Mammary epithelial cell (primary cell): ENCODE measurements at regions of chr5 and their contacts with region 1.

Region 1: DNA sequence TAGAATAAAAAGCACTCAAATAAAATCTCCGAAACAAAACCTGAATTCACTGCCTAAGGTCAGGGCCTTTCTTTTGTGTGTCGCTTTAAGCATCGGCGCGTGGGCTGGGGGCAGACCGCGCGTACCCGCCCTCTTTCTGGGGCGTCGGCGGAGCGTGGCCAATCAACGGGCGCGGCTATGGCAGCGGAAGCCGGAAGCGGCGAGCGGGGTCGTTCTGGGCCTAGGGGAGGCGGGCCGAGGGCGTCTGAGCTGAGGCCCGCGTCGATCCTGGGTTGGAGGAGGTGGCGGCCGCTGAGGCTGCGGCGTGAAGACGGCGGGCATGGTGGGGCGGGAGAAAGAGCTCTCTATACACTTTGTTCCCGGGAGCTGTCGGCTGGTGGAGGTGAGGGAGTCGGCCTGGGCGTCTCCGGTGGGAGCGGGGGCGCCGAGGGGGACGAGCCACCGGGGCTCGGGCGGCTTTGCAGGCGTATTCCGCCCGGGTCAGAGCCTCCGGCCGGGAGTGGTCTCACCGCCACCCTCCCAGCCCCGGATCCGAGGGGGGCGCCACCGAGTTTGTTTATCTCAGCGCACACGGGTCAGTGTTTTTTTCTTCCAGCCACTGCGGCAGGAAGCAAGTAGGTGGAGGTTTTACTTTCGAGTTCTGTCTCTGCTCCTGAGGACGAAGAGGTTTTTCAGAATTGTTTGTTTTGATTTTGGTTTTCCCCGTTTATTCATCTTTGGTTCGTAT is at the start of gene MAT2B:
- DNase-seq: peak; percentile 95
- H3K4me3 ChIP-seq: peak within 1 kb of the TSS; percentile 65 to 95 (median 76)
- H3K27ac ChIP-seq: peak within 1 kb of the TSS; percentile 95
- H3K4me1 ChIP-seq: peaks cover 14% of the 10 kb centered on the region
- H3K27me3 ChIP-seq: no peaks in the 10 kb centered on the region
- CTCF ChIP-seq: peak; percentile 17 to 48
- total RNA-seq, gene MAT2B: 46.1 to 49.2 TPM

Region 2: DNA sequence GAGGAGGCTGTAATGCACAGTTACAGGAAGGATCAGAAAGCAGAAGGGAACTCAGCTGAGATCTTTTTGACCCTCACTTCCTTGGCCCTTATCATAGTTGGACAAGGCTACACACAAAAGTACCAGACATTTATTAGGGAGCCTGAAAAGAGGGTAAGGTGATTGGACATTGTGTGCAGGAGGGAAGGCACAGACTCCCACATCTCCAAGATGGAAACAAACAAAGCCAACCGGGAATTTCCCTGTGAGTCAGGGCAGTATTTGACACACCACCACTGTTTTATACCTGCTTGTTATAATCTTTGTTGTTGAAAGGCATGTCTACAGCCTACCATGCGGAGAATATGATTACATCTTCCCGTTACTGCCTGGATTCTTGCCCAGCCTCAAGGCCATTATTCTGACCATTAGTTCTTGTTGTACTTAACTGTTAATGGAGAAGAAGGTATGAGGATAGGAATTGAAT is 71.1 kb before region 1 on chr5:
- CTCF ChIA-PET with region 1: no interaction called
- dilution Hi-C with region 1: no loop called
- in situ Hi-C with region 1: no loop called
- intact Hi-C with region 1: no loop called
- DNase-seq: peak; percentile 87
- H3K4me3 ChIP-seq: no peak overlapping the region
- H3K27ac ChIP-seq: no peak overlapping the region
- H3K4me1 ChIP-seq: peaks cover 6% of the 10 kb centered on the region
- H3K27me3 ChIP-seq: no peaks in the 10 kb centered on the region
- CTCF ChIP-seq: no peak

Region 3: DNA sequence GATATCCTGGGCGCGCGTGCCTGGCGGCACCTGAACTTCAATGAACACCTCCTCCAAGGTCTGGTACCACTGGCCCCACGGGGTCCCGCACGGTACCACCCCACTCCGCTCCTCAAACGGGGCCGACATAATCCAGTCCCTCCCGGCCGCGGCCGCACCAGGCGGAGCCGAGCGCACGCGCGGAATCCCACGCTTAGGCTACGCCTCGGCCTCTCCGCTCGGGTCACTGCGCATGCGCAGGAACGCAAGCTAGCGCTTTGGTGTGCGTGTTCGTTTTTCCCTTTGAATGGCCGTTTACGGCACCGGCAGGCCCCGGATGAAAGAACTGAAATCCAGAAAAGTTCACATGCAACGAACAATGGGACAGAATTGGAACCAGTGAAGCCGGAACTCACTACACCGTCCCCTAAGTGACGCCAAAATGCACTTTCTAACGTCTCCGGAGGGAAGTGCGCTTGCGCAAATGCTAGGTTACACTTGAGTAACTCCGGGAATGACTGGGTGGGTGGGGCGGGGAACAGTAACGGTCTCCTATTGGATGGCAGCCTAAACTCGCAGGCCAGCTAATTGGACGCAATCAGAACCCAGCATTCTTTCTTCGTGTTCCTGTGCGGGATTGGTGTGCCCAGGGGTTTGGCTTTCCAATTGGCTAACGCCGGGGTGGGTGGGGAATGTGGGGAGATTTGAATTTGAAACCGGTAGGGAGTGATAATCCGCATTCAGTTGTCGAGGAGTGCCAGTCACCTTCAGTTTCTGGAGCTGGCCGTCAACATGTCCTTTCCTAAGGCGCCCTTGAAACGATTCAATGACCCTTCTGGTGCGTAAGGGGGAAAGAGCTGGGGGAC is 45.4 kb before region 1 on chr5 and contains the starts of genes HMMR and NUDCD2:
- CTCF ChIA-PET with region 1: no interaction called
- dilution Hi-C with region 1: loop called (anchors 5 kb)
- in situ Hi-C with region 1: no loop called
- intact Hi-C with region 1: loop called (anchors 1 kb)
- DNase-seq: peak; percentile 98
- H3K4me3 ChIP-seq: peak within 1 kb of the TSS; percentile 60 to 83 (median 76)
- H3K27ac ChIP-seq: peak within 1 kb of the TSS; percentile 99
- H3K4me1 ChIP-seq: peaks cover 11% of the 10 kb centered on the region
- H3K27me3 ChIP-seq: no peaks in the 10 kb centered on the region
- CTCF ChIP-seq: peak in 1 of 2 donors; percentile 34
- total RNA-seq, gene HMMR: 0.33 to 30.7 TPM
- total RNA-seq, gene NUDCD2: 6.3 to 33.1 TPM

Region 4: GRCh38 chr5:163473635-163474243 is 31.8 kb before region 1 on chr5:
- CTCF ChIA-PET with region 1: interaction called, 3 read pairs
- dilution Hi-C with region 1: no loop called
- in situ Hi-C with region 1: no loop called
- intact Hi-C with region 1: loop called (anchors 1 kb)
- DNase-seq: no peak
- H3K4me3 ChIP-seq: no peak overlapping the region
- H3K27ac ChIP-seq: no peak overlapping the region
- H3K4me1 ChIP-seq: peaks cover 5% of the 10 kb centered on the region
- H3K27me3 ChIP-seq: no peaks in the 10 kb centered on the region
- CTCF ChIP-seq: peak; percentile 49 to 54

Region 5: DNA sequence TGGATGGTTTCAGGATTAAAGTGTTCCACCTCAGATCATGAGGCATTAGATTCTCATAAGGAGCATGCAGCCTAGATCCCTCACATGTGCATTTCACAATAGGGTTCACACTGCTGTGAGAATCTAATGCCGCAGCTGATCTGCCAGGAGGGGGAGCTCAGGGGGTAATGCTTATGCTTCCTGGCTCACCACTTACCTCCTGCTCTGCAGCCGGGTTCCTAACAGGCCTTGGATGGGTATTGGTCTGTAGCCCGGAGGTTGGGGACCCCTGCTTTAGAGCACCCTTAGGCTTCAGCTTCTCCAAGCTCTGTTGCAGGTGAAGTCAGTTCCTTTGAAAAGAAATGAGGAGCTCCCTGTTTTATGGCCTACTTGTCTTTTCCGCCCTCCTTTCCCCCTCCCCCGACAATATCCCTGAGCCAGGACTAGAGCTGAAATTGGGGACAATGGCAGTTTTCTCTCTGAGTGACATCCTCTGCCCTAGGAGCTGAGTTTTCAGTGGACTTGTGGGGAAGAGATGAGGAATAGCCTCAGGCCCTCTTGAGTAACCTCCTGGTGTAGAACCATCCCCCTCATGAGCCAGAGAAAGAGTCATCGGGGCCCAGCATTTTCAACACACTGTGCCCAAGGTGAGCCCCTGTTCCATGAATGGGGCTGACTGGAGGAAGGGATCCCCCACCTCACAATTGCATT is 16.3 kb before region 1 on chr5:
- CTCF ChIA-PET with region 1: interaction called, 3 read pairs
- dilution Hi-C with region 1: no loop called
- in situ Hi-C with region 1: no loop called
- intact Hi-C with region 1: loop called (anchors 1 kb)
- DNase-seq: peak; percentile 23
- H3K4me3 ChIP-seq: no peak overlapping the region
- H3K27ac ChIP-seq: no peak overlapping the region
- H3K4me1 ChIP-seq: no peaks in the 10 kb centered on the region
- H3K27me3 ChIP-seq: no peaks in the 10 kb centered on the region
- CTCF ChIP-seq: peak in 1 of 2 donors; percentile 25